GM12878 (cell line): ENCODE measurements at regions of chr9 and their contacts with region 1.

Region 1: DNA sequence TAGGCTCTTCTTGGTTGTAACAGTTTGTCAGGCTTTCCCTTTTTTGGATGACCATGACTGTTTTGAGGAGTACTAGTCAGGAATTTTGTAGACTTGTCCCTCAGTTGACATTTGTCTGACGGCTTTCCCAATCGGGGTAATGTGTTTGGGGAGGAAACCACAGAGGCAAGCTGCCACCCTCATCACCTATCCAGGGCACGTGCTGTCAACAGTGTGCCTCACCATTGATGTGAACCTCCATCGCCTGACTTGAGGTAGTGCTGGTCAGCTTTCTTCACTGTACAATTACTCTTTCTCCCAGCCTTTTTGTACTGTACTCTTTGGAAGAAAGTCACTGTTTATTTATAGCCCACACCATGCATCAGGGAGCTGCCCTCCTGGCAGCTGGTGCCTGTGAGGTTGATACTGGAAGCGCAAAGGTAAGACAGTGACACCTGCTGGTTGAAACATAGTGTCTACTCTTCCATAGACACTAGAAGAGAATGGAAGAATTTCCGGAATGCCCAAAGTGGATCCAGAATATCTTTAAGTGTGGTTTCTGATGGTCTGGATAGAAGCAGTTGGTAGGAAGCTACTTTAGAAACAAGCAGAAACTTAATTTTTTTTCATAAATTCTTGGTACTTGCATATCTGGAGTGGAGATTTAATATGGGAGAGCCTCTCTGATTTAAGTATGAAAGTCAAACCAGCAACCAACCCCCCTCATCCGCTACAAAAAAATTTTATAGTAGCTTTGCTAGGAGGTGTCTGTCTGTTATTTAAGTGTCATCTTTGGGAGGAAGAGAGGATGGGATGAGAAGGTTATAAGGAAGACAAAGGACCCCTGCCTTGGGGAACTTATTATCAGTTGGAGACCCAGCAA is 69.3 kb downstream of the SNX30 start:
- DNase-seq: peak; percentile 26
- ATAC-seq: peak; percentile 96
- H3K4me3 ChIP-seq: no peak overlapping the region
- H3K27ac ChIP-seq: no peak overlapping the region
- H3K4me1 ChIP-seq: peaks cover 13% of the 10 kb centered on the region
- H3K27me3 ChIP-seq: no peaks in the 10 kb centered on the region; a peak in 2 of 4 replicates
- CTCF ChIP-seq: peak; percentile 69 to 76 (median 76)
- EP300 ChIP-seq: no peak
- POLR2A ChIP-seq: no peak
- RAD21 ChIP-seq: peak; percentile 85

Region 2: DNA sequence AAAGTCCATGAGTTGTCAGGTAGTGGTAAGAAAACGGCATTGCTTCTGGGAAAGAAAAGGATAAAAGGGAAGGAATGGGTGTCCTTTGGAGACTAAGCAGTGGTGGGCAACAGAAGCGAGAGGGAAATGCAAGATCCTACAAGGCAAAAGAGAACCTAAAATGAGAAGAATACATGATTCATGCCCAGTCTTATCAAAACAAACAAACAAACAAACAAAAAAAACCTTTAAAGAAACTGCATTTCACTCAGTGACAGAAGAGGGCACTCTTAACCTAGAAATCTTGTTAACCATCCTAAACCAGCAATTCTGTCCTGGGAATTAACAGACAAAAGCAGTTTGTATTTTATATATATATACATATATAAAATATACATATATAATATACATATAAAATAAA is 733.2 kb before region 1 on chr9:
- CTCF ChIA-PET with region 1: interaction called, 14 read pairs
- POLR2A ChIA-PET with region 1: no interaction called
- RAD21 ChIA-PET with region 1: interaction called, 3 read pairs
- SMC1A ChIA-PET with region 1: interaction called, 3 read pairs
- in situ Hi-C with region 1: loop called (anchors 10 kb)
- intact Hi-C with region 1: loop called (anchors 5 kb)
- DNase-seq: no peak
- ATAC-seq: peak; percentile 36; the same call in 1 of the 3 replicates
- H3K4me3 ChIP-seq: no peak overlapping the region
- H3K27ac ChIP-seq: no peak overlapping the region
- H3K4me1 ChIP-seq: no peaks in the 10 kb centered on the region; the same call in 1 of the 2 replicates
- H3K27me3 ChIP-seq: no peaks in the 10 kb centered on the region
- CTCF ChIP-seq: peak; percentile 47 to 59 (median 51); a peak in 5 of 6 replicates
- EP300 ChIP-seq: no peak
- POLR2A ChIP-seq: no peak
- RAD21 ChIP-seq: peak; percentile 83

Region 3: GRCh38 chr9:112486221-112487007 is 333.5 kb before region 1 on chr9 and contains the start of gene KIAA1958:
- CTCF ChIA-PET with region 1: no interaction called
- POLR2A ChIA-PET with region 1: no interaction called
- RAD21 ChIA-PET with region 1: no interaction called
- SMC1A ChIA-PET with region 1: interaction called, 5 read pairs
- in situ Hi-C with region 1: no loop called
- intact Hi-C with region 1: loop called (anchors 1 kb)
- DNase-seq: peak; percentile 40
- ATAC-seq: peak; percentile 92
- H3K4me3 ChIP-seq: peak within 1 kb of the TSS; percentile 70
- H3K27ac ChIP-seq: peak within 1 kb of the TSS; percentile 54
- H3K4me1 ChIP-seq: no peaks in the 10 kb centered on the region
- H3K27me3 ChIP-seq: no peaks in the 10 kb centered on the region
- CTCF ChIP-seq: no peak
- EP300 ChIP-seq: no peak
- POLR2A ChIP-seq: peak; percentile 100
- RAD21 ChIP-seq: no peak
- polyA plus RNA-seq, gene KIAA1958: 0.53 to 0.80 TPM

Region 4: DNA sequence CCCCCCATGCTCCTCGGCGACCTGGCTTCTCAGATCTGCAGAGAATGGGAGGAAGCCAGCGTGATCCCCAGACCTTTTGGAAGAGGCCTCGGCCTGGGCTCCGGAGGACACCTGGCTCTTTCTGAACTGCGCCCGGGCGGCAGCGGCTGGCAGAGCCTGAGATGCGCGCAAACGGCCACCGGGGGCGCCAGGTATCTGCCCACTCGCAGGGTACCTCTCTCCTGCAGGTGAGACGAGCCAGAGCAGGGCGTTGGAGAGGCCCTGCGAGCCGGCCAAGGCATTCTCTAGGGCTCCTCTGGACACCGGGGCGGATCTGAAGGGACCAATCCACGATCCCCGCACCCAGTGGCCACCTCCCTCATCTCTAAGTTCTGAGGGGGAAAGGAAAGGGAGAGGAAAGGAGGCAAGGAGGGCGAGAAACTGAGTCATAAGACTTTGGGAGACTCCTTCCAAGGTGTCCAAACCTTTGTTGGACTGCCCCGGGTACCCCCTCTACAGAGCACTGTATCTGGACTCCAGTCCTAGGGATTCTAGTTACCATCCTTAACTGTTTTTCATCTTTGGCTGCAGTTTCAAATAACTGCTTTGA is 125.8 kb after region 1 on chr9:
- CTCF ChIA-PET with region 1: no interaction called
- POLR2A ChIA-PET with region 1: no interaction called
- RAD21 ChIA-PET with region 1: no interaction called
- SMC1A ChIA-PET with region 1: no interaction called
- in situ Hi-C with region 1: no loop called
- intact Hi-C with region 1: no loop called
- DNase-seq: no peak
- ATAC-seq: no peak
- H3K4me3 ChIP-seq: no peak overlapping the region
- H3K27ac ChIP-seq: no peak overlapping the region
- H3K4me1 ChIP-seq: no peaks in the 10 kb centered on the region
- H3K27me3 ChIP-seq: no peaks in the 10 kb centered on the region; a peak in 1 of 4 replicates
- CTCF ChIP-seq: 0 out of 6 replicates have a peak, but pooled peaks of 2 of the 3 experiments have one; percentile 7 to 23
- EP300 ChIP-seq: no peak
- POLR2A ChIP-seq: no peak
- RAD21 ChIP-seq: no peak